ENCODE measurements at regions of chr4 and their contacts with region 1.

Region 1: GRCh38 chr4:24930151-24930550 is 17.3 kb upstream of the CCDC149 start:
- DNase-seq: no peak
- H3K4me3 ChIP-seq: no peak overlapping the region
- H3K27ac ChIP-seq: no peak overlapping the region
- H3K4me1 ChIP-seq: peaks cover 0 to 5% (median 0%) of the 10 kb centered on the region in 4 experiments; a peak in 2 of 7 replicates
- H3K27me3 ChIP-seq: no peaks in the 10 kb centered on the region
- CTCF ChIP-seq: no peak
- EP300 ChIP-seq: no peak
- POLR2A ChIP-seq: no peak
- RAD21 ChIP-seq: no peak

Region 2: GRCh38 chr4:24816797-24817196 is 113.4 kb before region 1 on chr4:
- CTCF ChIA-PET with region 1: no interaction called
- POLR2A ChIA-PET with region 1: no interaction called
- DNase-seq: no peak
- H3K4me3 ChIP-seq: no peak overlapping the region
- H3K27ac ChIP-seq: no peak overlapping the region
- H3K4me1 ChIP-seq: no peaks in the 10 kb centered on the region; a peak in 1 of 7 replicates
- H3K27me3 ChIP-seq: no peaks in the 10 kb centered on the region
- CTCF ChIP-seq: no peak
- EP300 ChIP-seq: no peak
- POLR2A ChIP-seq: no peak
- RAD21 ChIP-seq: no peak

Region 3: GRCh38 chr4:24867766-24868296 is 62.3 kb before region 1 on chr4:
- CTCF ChIA-PET with region 1: no interaction called
- POLR2A ChIA-PET with region 1: no interaction called
- DNase-seq: no peak
- H3K4me3 ChIP-seq: peak overlapping the region in 1 of 4 experiments; percentile 11; a peak in 1 of 8 replicates
- H3K27ac ChIP-seq: peak overlapping the region; percentile 42; the same call in 1 of the 2 replicates
- H3K4me1 ChIP-seq: peaks cover 7 to 18% (median 12%) of the 10 kb centered on the region in 4 experiments; a peak in 6 of 7 replicates
- H3K27me3 ChIP-seq: no peaks in the 10 kb centered on the region; a peak in 1 of 7 replicates
- CTCF ChIP-seq: no peak
- EP300 ChIP-seq: no peak; a peak in 1 of 3 replicates
- POLR2A ChIP-seq: no peak
- RAD21 ChIP-seq: no peak

Region 4: DNA sequence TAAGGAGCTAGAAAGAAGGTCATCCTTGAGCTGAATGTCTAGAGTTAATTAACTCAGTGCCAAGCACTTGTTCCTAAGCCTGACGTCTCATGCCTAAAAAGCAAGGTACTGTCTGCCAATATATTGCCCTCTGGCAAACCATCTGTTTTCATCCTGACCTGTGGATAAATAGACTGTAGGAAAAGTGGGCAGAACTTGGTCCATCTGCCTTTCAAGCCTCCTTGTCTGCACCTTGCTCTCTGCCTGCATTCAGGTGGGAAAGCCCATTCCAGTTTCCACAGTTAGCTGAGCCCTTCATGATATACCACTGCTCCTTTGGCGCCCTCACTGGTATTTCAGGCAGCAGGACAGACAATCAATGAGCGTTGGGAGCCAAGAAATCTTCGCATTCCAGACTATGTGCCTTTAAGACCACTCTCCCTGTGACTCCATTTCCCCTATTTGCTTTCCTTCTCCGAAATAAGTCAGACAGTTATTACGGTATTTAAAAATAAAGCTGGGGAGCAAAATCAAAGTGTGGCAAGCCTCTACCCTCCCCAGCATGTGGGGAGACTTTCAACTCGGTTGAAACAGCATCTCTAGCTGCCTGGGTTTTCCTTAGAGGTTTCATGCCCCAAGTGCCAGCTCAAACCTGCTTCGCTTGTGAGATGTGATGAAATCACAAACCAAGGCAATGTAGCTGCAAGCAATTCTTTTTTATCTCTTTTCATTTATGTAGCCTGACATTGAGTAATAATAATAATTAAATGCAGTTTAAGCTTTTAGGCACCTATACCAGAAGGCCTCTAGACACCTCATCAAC is 14.8 kb before region 1 on chr4:
- CTCF ChIA-PET with region 1: interaction called, 17 read pairs
- POLR2A ChIA-PET with region 1: no interaction called
- DNase-seq: no peak
- H3K4me3 ChIP-seq: no peak overlapping the region
- H3K27ac ChIP-seq: no peak overlapping the region
- H3K4me1 ChIP-seq: peaks cover 7 to 14% (median 11%) of the 10 kb centered on the region in 4 experiments
- H3K27me3 ChIP-seq: peaks cover 0 to 17% (median 6%) of the 10 kb centered on the region in 4 experiments; a peak in 5 of 7 replicates
- CTCF ChIP-seq: peak; percentile 28 to 68 (median 47); a peak in 3 of 4 replicates
- EP300 ChIP-seq: no peak
- POLR2A ChIP-seq: no peak
- RAD21 ChIP-seq: peak; percentile 73 to 78